ENCODE measurements at regions of chr12 and their contacts with region 1.

Region 1: GRCh38 chr12:12433249-12433974 is 76.5 kb downstream of the BORCS5 start:
- DNase-seq: no peak
- H3K4me3 ChIP-seq: no peak overlapping the region
- H3K27me3 ChIP-seq: no peaks in the 10 kb centered on the region
- CTCF ChIP-seq: no peak

Region 2: GRCh38 chr12:12449467-12450025 is 16.1 kb after region 1 on chr12:
- CTCF ChIA-PET with region 1: interaction called, 4 read pairs
- POLR2A ChIA-PET with region 1: interaction called, 19 read pairs
- DNase-seq: no peak
- H3K4me3 ChIP-seq: no peak overlapping the region
- H3K27me3 ChIP-seq: no peaks in the 10 kb centered on the region
- CTCF ChIP-seq: no peak

Region 3: GRCh38 chr12:12510141-12510540 is 76.7 kb after region 1 on chr12:
- CTCF ChIA-PET with region 1: no interaction called
- POLR2A ChIA-PET with region 1: no interaction called
- DNase-seq: no peak
- H3K4me3 ChIP-seq: no peak overlapping the region
- H3K27me3 ChIP-seq: no peaks in the 10 kb centered on the region
- CTCF ChIP-seq: no peak